PC-3 (cell line): ENCODE measurements at regions of chr3 and their contacts with region 1.

Region 1: GRCh38 chr3:189710620-189711402 is 79.6 kb downstream of the TP63 start:
- DNase-seq: peak; percentile 95
- ATAC-seq: peak; percentile 71
- H3K4me3 ChIP-seq: no peak overlapping the region
- H3K27ac ChIP-seq: peak overlapping the region; percentile 66
- H3K4me1 ChIP-seq: peaks cover 55% of the 10 kb centered on the region
- H3K27me3 ChIP-seq: no peaks in the 10 kb centered on the region
- CTCF ChIP-seq: no peak

Region 2: GRCh38 chr3:189276481-189277219 is 434.2 kb before region 1 on chr3:
- CTCF ChIA-PET with region 1: interaction called, 3 read pairs
- POLR2A ChIA-PET with region 1: interaction called, 4 read pairs
- intact Hi-C with region 1: loop called (anchors 2 kb)
- DNase-seq: peak; percentile 78
- ATAC-seq: peak; percentile 66
- H3K4me3 ChIP-seq: peak overlapping the region; percentile 22; the same call in 1 of the 2 replicates
- H3K27ac ChIP-seq: peak overlapping the region; percentile 78
- H3K4me1 ChIP-seq: peaks cover 50% of the 10 kb centered on the region
- H3K27me3 ChIP-seq: no peaks in the 10 kb centered on the region
- CTCF ChIP-seq: no peak

Region 3: DNA sequence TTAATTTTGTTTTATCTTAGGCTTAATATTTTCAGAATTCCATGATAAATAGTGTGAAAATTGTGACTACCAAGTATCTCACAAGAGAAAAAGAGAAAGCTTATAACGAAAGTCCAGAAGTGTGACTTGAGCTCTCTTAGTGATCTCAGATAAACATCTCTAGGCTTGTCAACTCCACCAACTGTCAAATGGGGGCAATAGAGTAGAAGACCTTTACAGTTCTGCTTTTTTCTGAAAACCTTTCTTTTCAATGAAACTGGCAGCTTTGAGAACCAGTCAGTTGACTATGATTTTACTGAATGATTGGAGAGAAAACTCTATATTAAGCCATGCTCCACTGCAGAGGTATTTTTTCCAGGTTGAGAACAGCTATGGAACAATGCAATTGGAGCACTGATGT is 198.8 kb before region 1 on chr3:
- CTCF ChIA-PET with region 1: no interaction called
- POLR2A ChIA-PET with region 1: no interaction called
- intact Hi-C with region 1: loop called (anchors 2 kb)
- DNase-seq: no peak
- ATAC-seq: no peak
- H3K4me3 ChIP-seq: no peak overlapping the region
- H3K27ac ChIP-seq: peak overlapping the region; percentile 82; the same call in 1 of the 2 replicates
- H3K4me1 ChIP-seq: peaks cover 21% of the 10 kb centered on the region
- H3K27me3 ChIP-seq: no peaks in the 10 kb centered on the region
- CTCF ChIP-seq: no peak

Region 4: DNA sequence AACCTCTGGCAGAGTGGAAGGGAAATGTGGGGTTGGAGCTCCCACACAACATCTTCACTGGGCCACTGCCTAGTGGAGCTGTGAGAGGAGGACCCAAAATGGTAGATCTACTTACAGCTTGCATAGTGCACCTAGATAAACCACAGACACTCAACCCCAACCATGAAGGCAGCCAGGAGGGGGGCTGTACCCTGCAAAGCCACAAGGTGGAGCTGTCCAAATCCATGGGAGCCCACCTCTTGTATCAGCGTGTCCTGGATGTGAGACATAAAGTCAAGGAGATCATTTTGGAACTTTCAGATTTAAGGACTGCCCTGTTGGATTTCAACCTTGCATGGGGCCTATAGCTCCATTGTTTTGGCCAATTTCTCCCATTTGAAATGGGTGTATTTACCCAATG is 58.8 kb before region 1 on chr3:
- CTCF ChIA-PET with region 1: no interaction called
- POLR2A ChIA-PET with region 1: no interaction called
- intact Hi-C with region 1: no loop called
- DNase-seq: peak; percentile 32
- ATAC-seq: no peak
- H3K4me3 ChIP-seq: no peak overlapping the region
- H3K27ac ChIP-seq: no peak overlapping the region
- H3K4me1 ChIP-seq: no peaks in the 10 kb centered on the region
- H3K27me3 ChIP-seq: no peaks in the 10 kb centered on the region
- CTCF ChIP-seq: peak; percentile 57

Region 5: DNA sequence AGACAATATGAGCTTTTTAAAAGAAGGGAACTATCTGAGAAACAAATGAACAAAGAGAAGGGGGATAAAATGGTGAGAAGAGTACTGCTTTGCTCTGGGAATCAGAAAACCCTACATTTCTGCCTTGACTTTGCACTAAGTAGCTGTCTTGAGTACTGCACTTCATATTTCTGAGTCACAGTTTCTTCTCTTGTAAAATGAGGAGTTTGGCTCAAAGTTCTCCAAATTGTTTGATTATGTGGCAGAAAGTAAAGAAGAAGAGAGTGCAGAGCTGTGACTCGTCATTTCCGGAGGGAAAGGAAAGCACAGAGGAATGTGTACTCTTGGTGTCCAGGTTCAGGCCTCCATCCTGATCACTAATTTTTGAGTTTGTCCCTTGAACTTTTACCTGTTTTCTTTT is 25.0 kb before region 1 on chr3:
- CTCF ChIA-PET with region 1: interaction called, 5 read pairs
- POLR2A ChIA-PET with region 1: interaction called, 10 read pairs
- intact Hi-C with region 1: loop called (anchors 1 kb)
- DNase-seq: peak; percentile 97
- ATAC-seq: peak; percentile 97
- H3K4me3 ChIP-seq: peak overlapping the region; percentile 32; the same call in 1 of the 2 replicates
- H3K27ac ChIP-seq: peak overlapping the region; percentile 96
- H3K4me1 ChIP-seq: peaks cover 44% of the 10 kb centered on the region
- H3K27me3 ChIP-seq: no peaks in the 10 kb centered on the region
- CTCF ChIP-seq: no peak

Region 6: DNA sequence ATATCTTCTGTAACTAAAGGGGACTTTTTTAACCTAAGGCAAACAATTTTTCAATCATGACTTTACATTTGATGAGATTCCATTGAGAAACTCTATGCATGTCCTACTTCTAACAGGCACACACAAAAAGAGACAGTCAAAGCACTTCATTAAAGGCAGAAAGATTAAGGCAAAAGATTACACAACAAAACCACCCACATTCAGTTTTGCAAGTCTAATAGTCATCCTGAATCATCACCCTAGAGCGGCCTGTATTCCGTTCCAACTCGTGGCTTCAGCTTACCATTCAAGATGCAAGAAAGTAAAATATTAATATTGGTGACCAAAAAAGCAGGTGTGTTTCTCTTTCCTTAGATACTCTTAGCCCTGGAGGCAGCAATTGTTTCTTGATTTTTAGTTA is 204.0 kb after region 1 on chr3:
- CTCF ChIA-PET with region 1: no interaction called
- POLR2A ChIA-PET with region 1: no interaction called
- intact Hi-C with region 1: loop called (anchors 1 kb)
- DNase-seq: peak; percentile 94
- ATAC-seq: peak; percentile 89
- H3K4me3 ChIP-seq: no peak overlapping the region
- H3K27ac ChIP-seq: peak overlapping the region; percentile 74
- H3K4me1 ChIP-seq: peaks cover 57% of the 10 kb centered on the region
- H3K27me3 ChIP-seq: no peaks in the 10 kb centered on the region
- CTCF ChIP-seq: no peak

Region 7: DNA sequence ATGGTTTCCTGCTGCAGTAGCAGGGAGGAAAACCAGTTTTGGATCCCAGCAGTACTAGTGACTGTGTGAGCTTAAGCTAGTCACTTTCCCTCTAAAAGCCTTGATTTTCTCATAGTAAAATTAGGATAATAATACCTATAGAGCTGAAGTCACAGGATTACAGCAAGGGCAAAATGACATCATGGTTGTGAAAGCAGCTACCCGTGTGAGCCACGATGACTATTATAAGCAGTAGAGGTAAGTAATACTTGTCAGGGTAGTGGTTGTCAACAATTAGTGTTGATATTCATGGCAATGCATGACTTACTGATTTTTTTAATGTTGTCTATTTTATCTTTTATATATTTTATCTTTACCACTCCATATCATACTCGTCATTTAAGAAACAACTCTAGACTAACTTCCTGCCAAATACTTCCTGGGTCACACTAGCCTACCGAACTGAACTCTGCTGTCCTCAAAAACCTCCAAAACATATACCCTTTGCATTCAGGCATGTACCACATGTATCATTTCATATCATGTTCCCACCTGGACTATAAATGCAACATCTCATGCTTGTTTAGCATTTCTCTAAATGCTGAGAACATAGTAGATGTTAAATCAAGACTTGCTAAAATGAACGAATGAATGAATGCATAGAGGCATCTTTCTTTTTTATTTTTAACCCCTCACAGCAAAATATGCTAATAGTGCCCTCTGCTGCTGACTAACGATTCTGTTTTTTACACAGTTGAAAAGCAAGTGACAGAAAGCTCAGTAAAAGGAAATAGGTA is 237.3 kb after region 1 on chr3:
- CTCF ChIA-PET with region 1: interaction called, 4 read pairs
- POLR2A ChIA-PET with region 1: no interaction called
- intact Hi-C with region 1: loop called (anchors 1 kb)
- DNase-seq: peak; percentile 86
- ATAC-seq: peak; percentile 50
- H3K4me3 ChIP-seq: no peak overlapping the region
- H3K27ac ChIP-seq: peak overlapping the region; percentile 34; the same call in 1 of the 2 replicates
- H3K4me1 ChIP-seq: peaks cover 37% of the 10 kb centered on the region
- H3K27me3 ChIP-seq: no peaks in the 10 kb centered on the region
- CTCF ChIP-seq: peak; percentile 93